ENCODE measurements at regions of chr3 and their contacts with region 1.

Region 1: DNA sequence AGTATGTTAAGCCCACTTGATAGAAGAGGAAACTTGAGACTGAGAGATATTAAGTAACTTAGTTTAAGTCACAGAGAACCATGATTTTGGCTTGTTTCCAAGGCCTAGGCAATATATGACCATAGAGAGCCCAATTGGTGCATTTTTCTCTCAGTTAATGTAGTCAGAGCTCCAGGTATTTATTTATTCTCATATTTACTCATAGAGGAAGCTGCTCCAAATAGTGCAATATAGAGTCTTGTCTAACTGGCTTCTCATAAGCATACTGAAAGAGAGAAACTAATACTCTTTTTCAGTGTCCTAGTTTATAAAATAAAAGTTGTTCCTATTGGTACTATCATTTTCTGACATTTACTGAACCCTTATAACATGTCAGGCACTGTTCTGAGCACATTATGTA is 15.2 kb downstream of the TRNT1 start:
- DNase-seq: no peak
- H3K4me3 Mint-ChIP-seq: no peak overlapping the region
- H3K27ac Mint-ChIP-seq: no peak overlapping the region
- H3K4me1 Mint-ChIP-seq: no peaks in the 10 kb centered on the region
- H3K27me3 Mint-ChIP-seq: no peaks in the 10 kb centered on the region
- CTCF ChIP-seq: no peak

Region 2: DNA sequence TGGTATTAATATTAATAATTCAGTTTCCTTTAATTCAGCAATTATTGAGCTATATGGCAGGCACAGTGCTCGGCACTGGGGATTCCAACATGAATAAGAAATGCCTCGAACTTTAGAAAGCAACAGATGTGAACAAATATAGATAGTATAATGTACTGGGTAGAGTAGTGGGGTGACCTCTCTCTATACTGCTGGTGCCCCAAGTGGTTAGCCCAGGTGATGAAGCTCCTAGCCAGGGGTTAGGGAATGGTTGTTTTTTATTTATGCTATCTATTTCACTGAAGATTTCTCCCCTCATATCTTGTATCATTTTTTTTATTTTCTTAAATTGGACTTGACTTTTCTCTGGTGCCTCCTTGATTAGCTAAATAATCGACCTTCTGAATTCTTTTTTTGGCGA is 1899.4 kb after region 1 on chr3:
- CTCF ChIA-PET with region 1: no interaction called
- intact Hi-C with region 1: loop called (anchors 10 kb)
- DNase-seq: no peak
- H3K4me3 Mint-ChIP-seq: no peak overlapping the region
- H3K27ac Mint-ChIP-seq: no peak overlapping the region
- H3K4me1 Mint-ChIP-seq: no peaks in the 10 kb centered on the region
- H3K27me3 Mint-ChIP-seq: no peaks in the 10 kb centered on the region
- CTCF ChIP-seq: no peak

Measured in Calu3 (cell line).